Naive thymus-derived CD8-positive, alpha-beta T cell (primary cell): ENCODE measurements at regions of chr1 and their contacts with region 1.

Region 1: DNA sequence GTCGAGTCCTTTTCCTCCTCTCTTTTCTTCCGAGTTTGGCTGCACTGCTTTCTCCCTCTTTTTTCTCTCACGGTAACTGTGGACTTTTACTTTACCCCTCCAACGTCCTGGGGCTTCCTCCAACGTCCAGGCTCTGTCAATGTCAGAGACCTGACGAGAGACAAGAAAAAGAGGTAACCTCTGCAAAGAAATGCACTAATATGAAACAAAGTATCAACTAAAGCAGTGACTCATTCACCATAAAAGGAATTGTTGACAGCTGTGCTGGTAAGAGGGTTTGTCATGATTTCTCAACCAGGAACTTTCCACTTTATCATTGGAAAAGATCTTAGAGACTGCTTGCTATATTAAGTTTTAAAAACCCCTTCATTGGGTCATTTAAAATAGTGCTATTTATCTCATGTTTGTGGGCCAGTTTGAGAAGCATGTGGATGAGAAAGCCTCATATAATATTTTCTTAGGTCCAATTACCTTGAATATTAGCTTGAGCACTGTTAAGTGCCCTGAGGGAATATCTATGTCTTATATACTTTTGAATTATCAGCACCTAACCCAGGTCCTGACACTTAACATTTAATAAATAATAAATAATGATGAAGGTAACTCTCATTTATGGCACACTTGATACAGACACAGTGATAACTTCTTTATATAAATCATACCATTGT is at the start of gene GBP2:
- DNase-seq: peak in 3 of 10 donors; percentile 34 to 43 (median 35)
- ATAC-seq: peak; percentile 72 to 83
- H3K4me3 Mint-ChIP-seq: peak within 1 kb of the TSS; percentile 87 to 100 (median 100)
- H3K27ac Mint-ChIP-seq: peak within 1 kb of the TSS; percentile 93 to 100 (median 98)
- H3K4me1 Mint-ChIP-seq: peaks cover 32 to 81% (median 61%) of the 10 kb centered on the region in 4 donors
- H3K27me3 Mint-ChIP-seq: no peaks in the 10 kb centered on the region
- polyA plus RNA-seq, gene GBP2: 86.0 to 98.3 (median 90.2) TPM

Region 2: DNA sequence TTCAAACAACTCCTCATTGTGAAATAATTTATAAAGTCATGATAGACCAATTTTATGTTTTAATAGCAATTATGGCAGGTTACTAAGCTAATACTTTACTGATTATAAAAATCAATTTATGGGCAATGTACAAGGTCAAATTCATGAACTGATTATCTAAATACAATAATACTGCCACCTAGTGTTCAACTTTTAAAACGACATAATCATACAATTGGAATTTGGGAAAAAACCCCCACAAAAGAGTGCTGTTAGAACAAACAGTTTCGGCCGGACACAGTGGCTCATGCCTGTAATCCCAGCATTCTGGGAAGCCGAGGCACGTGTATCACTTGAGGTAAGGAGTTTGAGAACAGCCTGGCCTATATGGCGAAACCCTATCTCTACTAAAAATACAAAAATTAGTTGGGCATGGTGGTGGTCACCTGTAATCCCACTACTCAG is 248.6 kb before region 1 on chr1:
- POLR2A ChIA-PET with region 1: no interaction called
- DNase-seq: peak in 3 of 10 donors; percentile 31 to 42 (median 32)
- ATAC-seq: no peak
- H3K4me3 Mint-ChIP-seq: peak overlapping the region in 2 of 10 donors; percentile 15 to 51
- H3K27ac Mint-ChIP-seq: peak overlapping the region in 3 of 10 donors; percentile 6 to 51 (median 13)
- H3K4me1 Mint-ChIP-seq: peaks cover 20 to 67% (median 53%) of the 10 kb centered on the region in 4 donors
- H3K27me3 Mint-ChIP-seq: no peaks in the 10 kb centered on the region

Region 3: GRCh38 chr1:89065079-89065868 is 60.8 kb before region 1 on chr1 and contains the start of gene GBP1:
- POLR2A ChIA-PET with region 1: interaction called, 15 read pairs
- DNase-seq: peak in 4 of 10 donors; percentile 9 to 56 (median 53)
- ATAC-seq: peak; percentile 85 to 87
- H3K4me3 Mint-ChIP-seq: peak within 1 kb of the TSS; percentile 87 to 100 (median 94)
- H3K27ac Mint-ChIP-seq: peak within 1 kb of the TSS; percentile 87 to 99 (median 96)
- H3K4me1 Mint-ChIP-seq: peaks cover 28 to 62% (median 58%) of the 10 kb centered on the region in 4 donors
- H3K27me3 Mint-ChIP-seq: no peaks in the 10 kb centered on the region
- polyA plus RNA-seq, gene GBP1: 41.1 to 60.5 (median 44.7) TPM

Region 4: GRCh38 chr1:89198491-89199072 is 72.5 kb after region 1 on chr1 and contains the start of gene GBP4:
- POLR2A ChIA-PET with region 1: interaction called, 12 read pairs
- DNase-seq: peak; percentile 5 to 65 (median 32)
- ATAC-seq: peak; percentile 71 to 76
- H3K4me3 Mint-ChIP-seq: peak within 1 kb of the TSS; percentile 90 to 99 (median 96)
- H3K27ac Mint-ChIP-seq: peak within 1 kb of the TSS; percentile 93 to 100 (median 97)
- H3K4me1 Mint-ChIP-seq: peaks cover 20 to 81% (median 69%) of the 10 kb centered on the region in 4 donors
- H3K27me3 Mint-ChIP-seq: no peaks in the 10 kb centered on the region
- polyA plus RNA-seq, gene GBP4: 32.3 to 37.5 (median 32.4) TPM

Region 5: GRCh38 chr1:89274411-89274857 is 148.4 kb after region 1 on chr1:
- POLR2A ChIA-PET with region 1: interaction called, 20 read pairs
- DNase-seq: no peak
- ATAC-seq: peak in 1 of 2 donors; percentile 18
- H3K4me3 Mint-ChIP-seq: peak overlapping the region; percentile 57 to 90 (median 82)
- H3K27ac Mint-ChIP-seq: peak overlapping the region; percentile 4 to 99 (median 94)
- H3K4me1 Mint-ChIP-seq: peaks cover 41 to 88% (median 84%) of the 10 kb centered on the region in 4 donors
- H3K27me3 Mint-ChIP-seq: no peaks in the 10 kb centered on the region